ENCODE measurements at regions of chrX and their contacts with region 1.

Region 1: GRCh38 chrX:108070891-108071290 is 20.5 kb downstream of the PSMD10 start:
- DNase-seq: no peak
- H3K4me3 Mint-ChIP-seq: no peak overlapping the region
- H3K27ac Mint-ChIP-seq: no peak overlapping the region
- H3K4me1 Mint-ChIP-seq: no peaks in the 10 kb centered on the region
- H3K27me3 Mint-ChIP-seq: peaks cover 14% of the 10 kb centered on the region

Region 2: DNA sequence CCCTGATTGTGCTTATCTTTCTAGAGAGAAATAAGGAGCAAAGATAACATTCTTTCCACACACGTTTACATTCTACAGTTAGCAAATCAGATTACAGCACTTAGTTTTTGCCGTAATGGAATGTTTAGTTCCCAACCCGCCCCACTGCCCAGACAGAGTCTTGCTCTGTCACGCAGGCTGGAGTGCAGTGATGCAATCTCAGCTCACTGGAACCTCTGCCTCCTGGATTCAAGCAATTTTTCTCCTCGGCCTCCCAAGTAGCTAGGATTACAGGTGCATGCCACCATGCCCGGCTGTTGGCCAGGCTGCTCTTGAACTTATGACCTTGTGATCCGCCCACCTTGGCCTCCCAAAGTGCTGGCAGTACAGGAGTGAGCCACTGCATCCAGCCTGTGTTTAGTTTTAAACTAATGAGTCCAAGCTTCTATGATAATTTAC is 451.0 kb before region 1 on chrX:
- intact Hi-C with region 1: no loop called
- DNase-seq: no peak
- H3K4me3 Mint-ChIP-seq: no peak overlapping the region
- H3K27ac Mint-ChIP-seq: no peak overlapping the region
- H3K4me1 Mint-ChIP-seq: no peaks in the 10 kb centered on the region
- H3K27me3 Mint-ChIP-seq: peaks cover 8% of the 10 kb centered on the region

Region 3: DNA sequence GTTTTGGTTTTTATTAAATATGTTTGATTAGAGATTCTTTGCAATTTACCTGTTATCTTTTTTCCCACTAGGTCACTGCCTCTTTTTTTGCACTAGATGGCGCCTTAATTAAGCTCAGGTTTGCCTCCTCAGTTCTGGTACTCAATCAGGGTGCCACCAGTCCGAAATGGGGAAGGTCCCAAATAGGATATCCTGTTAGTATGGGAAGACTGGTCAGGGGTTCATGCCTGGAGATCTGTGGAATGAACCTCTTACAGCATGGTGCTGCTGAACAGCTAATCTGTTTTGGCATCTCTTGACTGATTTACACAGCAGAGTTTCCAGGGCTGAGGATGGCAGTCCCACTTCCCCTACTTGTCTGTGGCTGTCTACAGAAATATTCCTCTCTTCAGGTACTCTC is 50.3 kb before region 1 on chrX:
- intact Hi-C with region 1: loop called (anchors 1 kb)
- DNase-seq: no peak
- H3K4me3 Mint-ChIP-seq: no peak overlapping the region
- H3K27ac Mint-ChIP-seq: no peak overlapping the region
- H3K4me1 Mint-ChIP-seq: peaks cover 32% of the 10 kb centered on the region
- H3K27me3 Mint-ChIP-seq: peaks cover 5% of the 10 kb centered on the region

Region 4: DNA sequence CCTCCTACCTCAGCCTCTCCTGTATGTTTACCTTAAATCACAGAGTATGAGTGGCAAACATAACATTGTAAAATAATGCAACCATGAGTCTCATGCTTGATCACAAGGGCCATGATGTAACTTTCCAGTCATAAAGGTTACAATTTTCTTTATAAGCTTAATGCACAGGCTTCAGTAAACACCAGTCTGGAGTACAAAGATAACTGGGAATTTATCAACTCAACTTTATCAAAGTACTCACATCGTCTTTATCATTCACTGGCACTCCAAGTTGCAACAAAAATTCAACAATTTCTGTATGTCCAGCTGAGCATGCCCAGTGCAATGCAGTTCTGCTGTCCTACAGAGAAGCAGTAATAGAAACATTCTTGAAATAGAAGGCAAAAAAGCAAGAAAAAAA is 17.6 kb after region 1 on chrX:
- intact Hi-C with region 1: no loop called
- DNase-seq: no peak
- H3K4me3 Mint-ChIP-seq: no peak overlapping the region
- H3K27ac Mint-ChIP-seq: no peak overlapping the region
- H3K4me1 Mint-ChIP-seq: peaks cover 9% of the 10 kb centered on the region
- H3K27me3 Mint-ChIP-seq: no peaks in the 10 kb centered on the region

Measured in activated T-helper 2 cell treated with anti-CD3 and anti-CD28 coated beads, Interferon-gamma antibody, Interleukin-2, Interleukin-4, amounts not matched to agents 10 μg/mL and 5 μg/mL and 100 μg/mL, durations not matched to agents 14 hours and 24 hours and 36 hours (primary cell).